Endothelial cell of umbilical vein (primary cell): ENCODE measurements at regions of chr19 and their contacts with region 1.

Region 1: GRCh38 chr19:49546825-49547565 is 19.2 kb downstream of the RCN3 start:
- DNase-seq: peak; percentile 90
- H3K4me3 ChIP-seq: no peak overlapping the region
- H3K27ac ChIP-seq: no peak overlapping the region
- H3K4me1 ChIP-seq: peaks cover 2% of the 10 kb centered on the region
- H3K27me3 ChIP-seq: no peaks in the 10 kb centered on the region
- CTCF ChIP-seq: peak; percentile 66 to 81
- POLR2A ChIP-seq: no peak

Region 2: DNA sequence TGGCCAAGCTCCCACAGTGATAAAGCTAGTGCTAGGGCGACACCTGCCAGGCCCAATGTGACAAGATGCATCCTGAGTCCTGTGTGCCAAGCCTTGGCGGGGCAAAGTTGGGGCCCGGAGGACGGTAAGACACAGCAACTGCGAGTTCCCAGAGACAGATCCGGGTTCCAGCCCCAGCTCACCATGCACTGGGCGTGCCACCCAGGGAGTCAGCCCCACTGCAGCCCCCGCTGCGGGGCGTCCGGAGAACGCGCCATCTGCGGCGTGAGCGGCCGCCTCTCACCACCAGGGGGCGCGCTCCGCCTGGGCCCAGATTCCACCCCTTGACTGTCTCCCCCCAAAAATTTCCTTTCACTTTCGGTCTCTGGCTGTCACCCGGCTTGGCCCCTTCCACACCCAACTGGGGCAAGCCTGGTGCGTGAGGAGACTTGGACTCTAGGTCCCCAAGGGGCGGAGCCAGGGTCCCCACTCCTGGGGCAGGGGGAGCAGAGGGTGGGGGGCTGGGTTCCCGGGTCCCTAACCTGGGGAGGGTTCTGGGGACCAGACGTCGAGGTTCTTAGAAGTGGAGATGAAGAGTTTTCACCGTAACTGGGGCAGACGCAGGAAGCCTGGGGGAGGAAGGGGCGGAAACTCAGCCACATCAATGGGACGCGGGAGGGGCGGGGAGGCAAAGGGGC is 73.0 kb before region 1 on chr19 and contains the start of gene FLT3LG:
- CTCF ChIA-PET with region 1: interaction called, 13 read pairs
- POLR2A ChIA-PET with region 1: no interaction called
- dilution Hi-C with region 1: no loop called
- intact Hi-C with region 1: loop called (anchors 1 kb)
- DNase-seq: peak; percentile 68
- H3K4me3 ChIP-seq: peak within 1 kb of the TSS; percentile 62 to 93 (median 73)
- H3K27ac ChIP-seq: no peak within 1 kb of the TSS
- H3K4me1 ChIP-seq: peaks cover 6% of the 10 kb centered on the region
- H3K27me3 ChIP-seq: no peaks in the 10 kb centered on the region
- CTCF ChIP-seq: peak; percentile 99 to 100
- POLR2A ChIP-seq: no peak
- total RNA-seq, gene FLT3LG: 4.7 and 5.7 TPM in 2 replicates

Region 3: GRCh38 chr19:49502866-49503581 is 44.0 kb before region 1 on chr19:
- CTCF ChIA-PET with region 1: interaction called, 175 read pairs
- POLR2A ChIA-PET with region 1: interaction called, 5 read pairs
- dilution Hi-C with region 1: no loop called
- intact Hi-C with region 1: loop called (anchors 1 kb)
- DNase-seq: peak; percentile 83
- H3K4me3 ChIP-seq: no peak overlapping the region
- H3K27ac ChIP-seq: no peak overlapping the region
- H3K4me1 ChIP-seq: peaks cover 28% of the 10 kb centered on the region
- H3K27me3 ChIP-seq: no peaks in the 10 kb centered on the region
- CTCF ChIP-seq: peak; percentile 41 to 70
- POLR2A ChIP-seq: no peak

Region 4: DNA sequence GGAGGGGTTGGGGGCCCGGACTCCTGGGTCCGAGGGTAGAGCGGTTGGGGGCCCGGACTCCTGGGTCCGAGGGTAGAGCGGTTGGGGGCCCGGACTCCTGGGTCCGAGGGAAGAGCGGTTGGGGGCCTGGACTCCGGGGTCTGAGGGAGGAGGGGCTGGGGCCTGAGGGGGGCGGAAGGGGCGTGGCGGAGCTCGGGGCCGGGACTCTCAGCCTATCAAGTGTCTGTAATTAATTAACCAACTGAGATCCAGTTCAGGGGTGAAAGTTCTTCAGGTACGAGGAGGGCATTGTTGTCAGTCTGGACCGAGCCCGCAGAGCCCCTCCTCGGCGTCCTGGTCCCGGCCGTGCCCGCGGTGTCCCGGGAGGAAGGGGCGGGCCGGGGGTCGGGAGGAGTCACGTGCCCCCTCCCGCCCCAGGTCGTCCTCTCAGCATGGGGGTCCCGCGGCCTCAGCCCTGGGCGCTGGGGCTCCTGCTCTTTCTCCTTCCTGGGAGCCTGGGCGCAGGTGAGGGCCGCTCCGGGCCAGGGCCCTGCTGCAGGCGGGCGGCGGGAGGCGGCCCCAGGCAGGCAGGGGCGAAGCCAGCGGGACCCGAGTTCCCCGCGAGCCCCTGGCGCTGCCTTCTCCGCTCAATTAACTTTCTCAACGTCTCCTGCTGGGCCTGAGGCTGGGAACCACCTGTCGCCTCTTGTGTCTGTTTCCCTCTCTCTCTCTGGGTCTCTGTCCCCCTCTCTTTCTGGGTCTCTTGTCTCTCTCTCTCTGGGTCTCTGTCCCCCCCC is 33.8 kb before region 1 on chr19:
- CTCF ChIA-PET with region 1: interaction called, 175 read pairs
- POLR2A ChIA-PET with region 1: interaction called, 3 read pairs
- dilution Hi-C with region 1: no loop called
- intact Hi-C with region 1: no loop called
- DNase-seq: peak; percentile 44
- H3K4me3 ChIP-seq: peak overlapping the region; percentile 60 to 81 (median 66)
- H3K27ac ChIP-seq: peak overlapping the region; percentile 6
- H3K4me1 ChIP-seq: peaks cover 15% of the 10 kb centered on the region
- H3K27me3 ChIP-seq: no peaks in the 10 kb centered on the region
- CTCF ChIP-seq: no peak
- POLR2A ChIP-seq: no peak

Region 5: GRCh38 chr19:49528211-49528771 is 18.7 kb before region 1 on chr19:
- CTCF ChIA-PET with region 1: interaction called, 30 read pairs
- POLR2A ChIA-PET with region 1: no interaction called
- dilution Hi-C with region 1: no loop called
- intact Hi-C with region 1: loop called (anchors 2 kb)
- DNase-seq: peak; percentile 32
- H3K4me3 ChIP-seq: peak overlapping the region; percentile 21 to 45 (median 42)
- H3K27ac ChIP-seq: peak overlapping the region; percentile 62
- H3K4me1 ChIP-seq: peaks cover 1% of the 10 kb centered on the region
- H3K27me3 ChIP-seq: no peaks in the 10 kb centered on the region
- CTCF ChIP-seq: no peak
- POLR2A ChIP-seq: no peak

Region 6: GRCh38 chr19:49533551-49534488 is 13.2 kb before region 1 on chr19:
- CTCF ChIA-PET with region 1: interaction called, 30 read pairs
- POLR2A ChIA-PET with region 1: no interaction called
- dilution Hi-C with region 1: no loop called
- intact Hi-C with region 1: loop called (anchors 2 kb)
- DNase-seq: peak; percentile 85
- H3K4me3 ChIP-seq: peak overlapping the region; percentile 15 to 53 (median 38)
- H3K27ac ChIP-seq: no peak overlapping the region
- H3K4me1 ChIP-seq: peaks cover 7% of the 10 kb centered on the region
- H3K27me3 ChIP-seq: no peaks in the 10 kb centered on the region
- CTCF ChIP-seq: peak; percentile 32 to 53
- POLR2A ChIP-seq: no peak

Region 7: DNA sequence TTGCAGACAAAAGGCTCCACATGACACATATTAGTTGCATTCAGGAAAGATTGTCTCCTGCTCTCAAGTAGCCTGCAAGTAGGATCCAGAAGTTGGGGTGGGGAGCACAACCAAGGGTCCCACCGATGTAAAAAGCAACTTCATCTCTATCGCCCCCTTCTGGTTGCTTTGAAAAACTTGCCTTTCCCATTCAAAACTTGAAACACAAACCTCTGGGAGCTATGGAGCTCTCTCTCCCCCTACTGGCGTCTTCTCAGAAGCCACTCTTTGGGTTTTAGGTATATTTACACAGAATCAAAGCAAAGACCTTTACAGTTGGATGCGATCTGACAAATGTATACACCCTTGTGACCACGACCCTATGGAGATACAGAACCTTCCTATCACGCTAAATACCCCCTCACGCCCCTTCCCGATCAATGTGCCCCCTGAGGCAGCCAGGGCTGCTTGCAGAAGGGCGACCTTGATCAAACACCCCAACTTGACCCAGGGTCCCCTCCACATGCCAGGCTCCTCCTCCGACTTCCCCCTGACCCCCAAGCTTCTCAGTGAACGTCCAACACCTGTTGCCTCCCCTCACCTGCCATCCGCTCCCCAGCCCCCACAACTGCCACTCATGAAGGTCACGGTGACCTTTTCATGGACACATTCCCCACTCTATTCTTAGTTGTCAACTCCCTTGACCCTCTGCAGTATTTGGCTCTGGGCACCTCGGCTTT is 23.3 kb after region 1 on chr19:
- CTCF ChIA-PET with region 1: interaction called, 50 read pairs
- POLR2A ChIA-PET with region 1: no interaction called
- dilution Hi-C with region 1: no loop called
- intact Hi-C with region 1: loop called (anchors 1 kb)
- DNase-seq: peak; percentile 80
- H3K4me3 ChIP-seq: no peak overlapping the region
- H3K27ac ChIP-seq: no peak overlapping the region
- H3K4me1 ChIP-seq: no peaks in the 10 kb centered on the region
- H3K27me3 ChIP-seq: no peaks in the 10 kb centered on the region
- CTCF ChIP-seq: peak; percentile 94 to 99
- POLR2A ChIP-seq: no peak